ENCODE measurements at regions of chr4 and their contacts with region 1.

Region 1: DNA sequence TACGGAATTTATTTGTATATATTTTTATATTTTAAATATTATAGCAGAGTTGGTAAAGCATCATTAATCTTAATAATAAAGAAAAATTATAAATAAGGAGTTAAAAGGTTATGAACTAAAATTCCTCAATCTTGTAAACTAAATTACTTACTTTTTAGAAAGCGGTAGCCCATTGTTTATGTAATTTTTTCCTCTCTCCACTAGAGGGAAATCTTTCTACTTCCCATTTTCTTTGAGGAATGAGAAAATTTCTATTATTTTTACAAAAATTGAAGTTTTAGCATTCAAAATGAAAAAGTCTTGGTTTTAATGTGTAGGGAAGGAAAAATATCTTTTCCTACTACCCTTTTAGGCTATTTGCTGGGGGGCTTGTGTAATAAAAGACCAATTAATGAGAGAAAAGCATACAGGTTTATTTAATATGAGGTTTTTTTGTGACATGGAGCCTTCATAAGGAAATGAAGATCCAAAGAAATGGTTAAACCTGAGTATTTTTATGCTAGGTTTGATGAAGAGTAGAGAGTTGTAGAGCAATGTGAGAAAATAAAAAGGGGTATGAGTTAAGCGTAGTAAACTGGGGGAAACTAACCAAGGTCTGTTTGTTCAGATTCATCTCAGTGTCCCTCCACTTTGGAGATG is 68.7 kb upstream of the ADAD1 start:
- DNase-seq: peak; percentile 46
- H3K4me3 ChIP-seq: no peak overlapping the region
- H3K27ac ChIP-seq: no peak overlapping the region
- H3K4me1 ChIP-seq: 0 out of 2 replicates have a peak, but pooled peaks cover 4% of the 10 kb centered on the region
- H3K27me3 ChIP-seq: no peaks in the 10 kb centered on the region

Region 2: GRCh38 chr4:122930862-122931261 is 620.8 kb after region 1 on chr4:
- in situ Hi-C with region 1: loop called (anchors 25 kb)
- DNase-seq: peak; percentile 57
- H3K4me3 ChIP-seq: no peak overlapping the region
- H3K27ac ChIP-seq: no peak overlapping the region
- H3K4me1 ChIP-seq: peaks cover 8% of the 10 kb centered on the region; the same call in 1 of the 2 replicates
- H3K27me3 ChIP-seq: no peaks in the 10 kb centered on the region

Measured in GM23248 (cell line).